Activated naive CD4-positive, alpha-beta T cell treated with anti-CD3 and anti-CD28 coated beads for 36 hours (primary cell): ENCODE measurements at regions of chr6 and their contacts with region 1.

Region 1: DNA sequence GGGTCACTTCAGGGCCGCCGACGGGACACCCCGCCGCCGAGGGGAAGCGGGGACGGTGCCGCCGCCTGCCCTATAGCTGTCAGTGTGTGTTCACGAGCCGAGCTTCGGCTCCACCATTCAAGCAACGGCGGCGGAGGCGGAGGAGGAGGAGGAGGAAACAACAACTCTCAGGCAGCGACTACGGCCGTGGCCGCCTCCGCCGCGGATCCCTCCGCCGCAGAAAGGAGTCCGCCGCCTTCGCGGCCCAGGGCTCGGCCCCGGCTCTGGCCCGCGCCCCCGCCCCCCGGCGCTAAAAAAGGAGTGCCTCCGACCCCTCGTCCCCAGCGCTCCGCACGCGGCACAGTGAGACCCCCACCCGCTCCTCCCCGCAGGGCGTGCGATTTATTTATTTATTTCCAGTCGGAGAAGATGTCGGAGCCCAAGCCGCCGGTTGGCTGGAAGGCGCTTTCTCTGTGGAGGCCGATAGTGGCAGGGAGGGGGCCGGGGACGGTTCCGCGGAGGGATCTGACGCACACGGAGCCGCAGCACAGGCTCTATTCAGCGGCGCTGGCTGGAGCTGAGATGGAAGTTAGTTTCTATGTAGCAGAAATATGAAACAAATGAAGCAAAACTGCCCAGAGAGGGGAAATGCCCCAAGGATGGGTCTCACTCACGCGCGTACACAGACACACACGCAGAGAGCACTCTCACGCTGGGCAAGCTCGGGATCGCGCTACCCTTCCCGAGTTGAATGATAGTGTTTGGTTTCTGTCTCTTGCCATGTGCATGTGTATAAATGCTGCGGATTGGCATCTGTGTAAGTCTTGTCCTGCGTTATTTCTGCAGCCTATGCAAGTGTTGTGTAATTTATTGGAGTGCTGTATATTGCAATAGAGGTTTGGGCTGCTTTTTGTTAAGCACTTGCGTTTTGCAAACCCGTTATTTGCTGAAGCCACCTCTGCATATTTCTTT is at the start of gene PHIP:
- DNase-seq: peak; percentile 93
- H3K4me3 Mint-ChIP-seq: peak within 1 kb of the TSS; percentile 92
- H3K27ac Mint-ChIP-seq: peak within 1 kb of the TSS; percentile 96
- H3K4me1 Mint-ChIP-seq: peaks cover 32% of the 10 kb centered on the region
- H3K27me3 Mint-ChIP-seq: peaks cover 10% of the 10 kb centered on the region
- total RNA-seq, gene PHIP: 23.0 to 23.5 TPM

Region 2: GRCh38 chr6:78910591-78911171 is 167.7 kb before region 1 on chr6:
- CTCF ChIA-PET with region 1: no interaction called
- intact Hi-C with region 1: loop called (anchors 2 kb)
- DNase-seq: peak; percentile 38
- H3K4me3 Mint-ChIP-seq: peak overlapping the region; percentile 19
- H3K27ac Mint-ChIP-seq: no peak overlapping the region
- H3K4me1 Mint-ChIP-seq: peaks cover 13% of the 10 kb centered on the region
- H3K27me3 Mint-ChIP-seq: peaks cover 32% of the 10 kb centered on the region

Region 3: DNA sequence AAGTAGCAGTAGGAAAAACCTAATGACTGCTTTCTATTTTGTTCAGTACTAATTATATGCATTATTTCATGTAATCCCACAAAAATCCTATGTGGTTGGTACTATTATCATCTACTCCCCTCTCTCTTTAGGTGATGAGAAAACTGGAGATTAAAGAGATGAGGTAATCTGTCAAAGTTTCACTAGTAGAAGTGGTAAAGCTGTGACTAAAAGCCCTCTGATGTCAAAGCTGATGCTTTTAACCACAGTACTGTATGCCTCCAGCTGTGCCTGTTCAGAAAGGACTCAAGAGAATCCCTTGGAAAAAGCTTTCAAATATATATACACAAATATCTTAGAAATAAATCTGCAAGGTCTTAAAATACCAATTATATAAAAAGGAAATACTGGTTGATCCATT is 38.3 kb before region 1 on chr6:
- CTCF ChIA-PET with region 1: no interaction called
- intact Hi-C with region 1: loop called (anchors 1 kb)
- DNase-seq: peak; percentile 33
- H3K4me3 Mint-ChIP-seq: no peak overlapping the region
- H3K27ac Mint-ChIP-seq: no peak overlapping the region
- H3K4me1 Mint-ChIP-seq: peaks cover 51% of the 10 kb centered on the region
- H3K27me3 Mint-ChIP-seq: no peaks in the 10 kb centered on the region

Region 4: GRCh38 chr6:79466207-79466834 is 388.0 kb after region 1 on chr6:
- CTCF ChIA-PET with region 1: interaction called, 3 read pairs
- intact Hi-C with region 1: loop called (anchors 10 kb)
- DNase-seq: no peak
- H3K4me3 Mint-ChIP-seq: no peak overlapping the region
- H3K27ac Mint-ChIP-seq: no peak overlapping the region
- H3K4me1 Mint-ChIP-seq: no peaks in the 10 kb centered on the region
- H3K27me3 Mint-ChIP-seq: peaks cover 19% of the 10 kb centered on the region

Region 5: DNA sequence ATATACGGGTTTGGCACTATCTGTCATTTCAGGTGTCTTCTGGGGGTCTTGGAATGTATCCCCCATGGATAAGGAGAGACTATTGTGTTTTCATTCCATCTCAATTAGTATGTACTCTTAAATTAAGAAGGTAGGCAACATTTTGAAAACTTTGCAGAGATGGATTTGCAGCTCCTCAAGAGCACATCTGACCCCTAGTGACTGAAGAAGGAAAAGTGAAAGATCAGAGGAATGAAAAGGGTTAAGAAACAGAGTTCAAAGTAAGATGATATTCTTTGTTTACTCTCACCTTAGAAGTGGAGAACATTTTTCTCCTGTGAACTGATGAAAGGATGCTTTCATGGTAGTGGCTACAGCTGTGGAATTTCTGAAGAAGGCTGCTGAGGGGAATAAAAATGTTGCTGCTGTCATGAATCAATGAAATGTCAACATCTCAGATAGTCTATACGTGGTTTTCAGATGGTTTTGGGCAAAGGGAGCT is 594.3 kb after region 1 on chr6:
- CTCF ChIA-PET with region 1: no interaction called
- intact Hi-C with region 1: loop called (anchors 2 kb)
- DNase-seq: no peak
- H3K4me3 Mint-ChIP-seq: no peak overlapping the region
- H3K27ac Mint-ChIP-seq: peak overlapping the region; percentile 43
- H3K4me1 Mint-ChIP-seq: peaks cover 32% of the 10 kb centered on the region
- H3K27me3 Mint-ChIP-seq: no peaks in the 10 kb centered on the region

Region 6: DNA sequence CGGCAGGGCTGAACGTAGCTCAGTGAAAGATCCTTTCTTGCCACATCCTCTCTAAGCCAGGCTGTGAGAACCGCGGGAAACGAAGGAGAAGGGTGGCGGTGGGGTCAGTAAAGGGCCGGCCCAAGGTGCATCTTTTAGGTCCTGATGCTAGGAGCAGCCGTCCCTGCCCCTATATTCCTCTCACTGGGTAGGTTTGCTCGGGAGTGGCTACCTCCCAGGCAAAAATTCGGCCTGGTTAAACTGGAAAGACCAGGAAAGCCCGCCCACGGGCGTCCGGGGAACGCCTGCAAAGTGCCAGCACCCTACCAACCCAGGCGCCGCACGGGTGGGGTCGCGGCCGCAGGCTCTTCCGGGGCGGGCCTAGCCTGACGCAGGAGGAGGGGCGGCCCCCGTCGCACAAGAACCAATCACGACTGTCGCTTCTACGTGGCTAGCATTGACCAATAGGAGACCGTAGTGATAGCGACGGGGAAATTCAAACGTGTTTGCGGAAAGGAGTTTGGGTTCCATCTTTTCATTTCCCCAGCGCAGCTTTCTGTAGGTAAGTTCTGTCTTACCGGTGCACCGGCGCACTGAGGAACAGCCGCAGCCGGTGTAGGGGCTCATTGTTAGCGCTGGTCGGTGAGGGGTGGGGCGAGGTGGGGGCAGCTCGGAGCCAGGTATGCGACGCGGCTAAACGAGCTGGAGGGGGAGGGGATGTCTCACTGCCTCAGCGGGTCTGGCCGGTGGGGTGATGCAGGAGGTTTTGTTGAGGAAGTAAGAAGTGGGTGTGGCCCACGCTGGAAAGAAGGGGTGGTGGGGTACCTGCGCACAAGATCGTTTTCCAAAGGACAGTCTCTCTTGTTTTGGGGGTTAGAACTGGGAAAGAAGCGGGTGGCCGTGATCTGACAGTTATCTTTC is 926.1 kb after region 1 on chr6 and contains the start of gene TTK:
- CTCF ChIA-PET with region 1: no interaction called
- intact Hi-C with region 1: loop called (anchors 1 kb)
- DNase-seq: peak; percentile 93
- H3K4me3 Mint-ChIP-seq: peak within 1 kb of the TSS; percentile 95
- H3K27ac Mint-ChIP-seq: peak within 1 kb of the TSS; percentile 89
- H3K4me1 Mint-ChIP-seq: peaks cover 16% of the 10 kb centered on the region
- H3K27me3 Mint-ChIP-seq: peaks cover 1% of the 10 kb centered on the region
- total RNA-seq, gene TTK: 45.9 to 51.1 TPM

Region 7: GRCh38 chr6:80163658-80164187 is 1085.4 kb after region 1 on chr6:
- CTCF ChIA-PET with region 1: no interaction called
- intact Hi-C with region 1: loop called (anchors 5 kb)
- DNase-seq: peak; percentile 18
- H3K4me3 Mint-ChIP-seq: no peak overlapping the region
- H3K27ac Mint-ChIP-seq: no peak overlapping the region
- H3K4me1 Mint-ChIP-seq: no peaks in the 10 kb centered on the region
- H3K27me3 Mint-ChIP-seq: no peaks in the 10 kb centered on the region